CD4-positive, alpha-beta T cell (primary cell): ENCODE measurements at regions of chr5 and their contacts with region 1.

Region 1: DNA sequence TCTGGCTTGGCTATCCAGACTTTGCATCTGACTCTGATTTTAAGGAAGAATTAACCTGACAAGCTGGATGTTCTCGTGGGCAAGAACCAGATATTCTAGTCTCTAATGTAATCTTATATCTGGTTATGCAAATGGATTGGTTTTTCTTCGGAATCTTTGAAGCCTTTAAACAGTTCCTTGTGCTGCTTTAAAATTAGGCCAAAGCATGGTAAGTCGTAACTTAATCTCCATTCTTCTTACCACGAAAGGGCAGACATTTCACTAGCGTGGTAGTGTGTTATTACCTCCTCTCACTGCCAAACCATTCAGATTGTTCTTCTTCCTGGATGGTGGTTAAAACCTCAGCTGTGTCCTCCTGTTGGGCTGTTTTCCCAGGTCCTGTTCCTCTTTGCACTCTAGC is 34.1 kb upstream of the TTC23L start:
- DNase-seq: no peak
- ATAC-seq: no peak
- H3K4me3 ChIP-seq: no peak overlapping the region
- H3K4me3 Mint-ChIP-seq: no peak overlapping the region
- H3K27ac ChIP-seq: no peak overlapping the region
- H3K27ac Mint-ChIP-seq: no peak overlapping the region
- H3K4me1 ChIP-seq: no peaks in the 10 kb centered on the region
- H3K4me1 Mint-ChIP-seq: no peaks in the 10 kb centered on the region
- H3K27me3 ChIP-seq: no peaks in the 10 kb centered on the region
- H3K27me3 Mint-ChIP-seq: no peaks in the 10 kb centered on the region
- CTCF ChIP-seq: no peak

Region 2: GRCh38 chr5:34743878-34744277 is 61.0 kb before region 1 on chr5:
- CTCF ChIA-PET with region 1: no interaction called
- POLR2A ChIA-PET with region 1: no interaction called
- intact Hi-C with region 1: no loop called
- DNase-seq: no peak
- ATAC-seq: no peak
- H3K4me3 ChIP-seq: no peak overlapping the region
- H3K4me3 Mint-ChIP-seq: no peak overlapping the region
- H3K27ac ChIP-seq: no peak overlapping the region
- H3K27ac Mint-ChIP-seq: no peak overlapping the region
- H3K4me1 ChIP-seq: peaks cover 4% of the 10 kb centered on the region
- H3K4me1 Mint-ChIP-seq: no peaks in the 10 kb centered on the region
- H3K27me3 ChIP-seq: no peaks in the 10 kb centered on the region
- H3K27me3 Mint-ChIP-seq: no peaks in the 10 kb centered on the region
- CTCF ChIP-seq: no peak

Region 3: DNA sequence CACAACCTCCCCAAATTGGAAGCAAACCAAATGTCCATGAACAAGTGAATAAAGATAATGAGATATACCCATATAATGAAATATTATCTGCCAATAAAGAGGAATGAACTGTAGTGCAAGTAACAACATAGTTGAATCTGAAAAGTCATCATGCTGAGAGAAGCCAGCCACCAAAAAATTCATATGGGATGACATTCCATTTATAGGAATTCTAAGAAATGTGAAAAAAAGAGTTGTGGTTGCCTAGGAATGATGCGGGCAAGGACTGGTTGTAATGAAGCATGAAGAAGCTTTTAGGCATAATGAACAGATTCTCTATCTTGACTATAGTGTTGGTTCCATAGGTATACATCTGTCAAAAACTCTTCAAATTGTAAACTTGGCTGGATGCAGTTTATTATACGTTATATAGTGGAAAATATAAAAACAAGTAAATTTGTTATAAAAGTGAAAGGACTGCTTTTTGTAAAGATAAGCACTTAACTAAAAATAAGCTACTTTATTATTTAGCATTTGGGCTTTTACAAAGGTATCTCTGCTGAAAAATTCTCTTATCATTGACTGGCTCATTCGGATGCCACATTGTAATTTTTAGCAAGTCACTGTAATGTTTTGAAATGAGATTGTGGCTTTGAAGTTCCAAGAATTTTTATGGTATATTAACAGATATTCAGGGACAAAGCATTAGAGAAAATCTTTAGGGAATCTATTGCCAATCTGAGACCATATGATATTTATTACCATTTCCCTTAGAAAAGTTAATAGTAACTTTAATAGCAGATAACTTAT is 12.8 kb after region 1 on chr5:
- CTCF ChIA-PET with region 1: no interaction called
- POLR2A ChIA-PET with region 1: no interaction called
- intact Hi-C with region 1: no loop called
- DNase-seq: no peak
- ATAC-seq: no peak
- H3K4me3 ChIP-seq: no peak overlapping the region
- H3K4me3 Mint-ChIP-seq: no peak overlapping the region
- H3K27ac ChIP-seq: no peak overlapping the region
- H3K27ac Mint-ChIP-seq: no peak overlapping the region
- H3K4me1 ChIP-seq: no peaks in the 10 kb centered on the region
- H3K4me1 Mint-ChIP-seq: no peaks in the 10 kb centered on the region
- H3K27me3 ChIP-seq: no peaks in the 10 kb centered on the region
- H3K27me3 Mint-ChIP-seq: no peaks in the 10 kb centered on the region
- CTCF ChIP-seq: no peak

Region 4: GRCh38 chr5:34833976-34834793 is 29.3 kb after region 1 on chr5:
- CTCF ChIA-PET with region 1: no interaction called
- POLR2A ChIA-PET with region 1: no interaction called
- intact Hi-C with region 1: no loop called
- DNase-seq: no peak
- ATAC-seq: no peak
- H3K4me3 ChIP-seq: no peak overlapping the region
- H3K4me3 Mint-ChIP-seq: no peak overlapping the region
- H3K27ac ChIP-seq: no peak overlapping the region
- H3K27ac Mint-ChIP-seq: no peak overlapping the region
- H3K4me1 ChIP-seq: peaks cover 9% of the 10 kb centered on the region
- H3K4me1 Mint-ChIP-seq: peaks cover 11% of the 10 kb centered on the region
- H3K27me3 ChIP-seq: no peaks in the 10 kb centered on the region
- H3K27me3 Mint-ChIP-seq: no peaks in the 10 kb centered on the region
- CTCF ChIP-seq: no peak

Region 5: DNA sequence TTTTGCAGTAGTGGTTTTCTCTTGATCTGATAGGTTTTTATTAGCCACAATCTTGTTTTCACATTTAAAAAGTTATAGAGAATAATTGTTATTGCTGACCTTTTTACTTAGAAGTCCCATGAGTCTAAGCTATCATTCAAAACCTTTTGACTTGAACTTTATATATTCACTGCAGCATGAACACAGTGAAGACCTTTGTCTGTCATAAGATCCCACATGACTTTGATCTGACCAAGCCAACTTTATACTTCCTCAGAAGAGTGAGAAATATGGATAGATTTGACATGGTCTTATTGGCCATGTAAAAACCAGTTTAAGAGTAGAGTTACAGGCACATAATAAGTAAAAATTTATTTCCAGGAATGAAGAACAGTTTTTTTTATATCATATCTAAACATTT is 76.3 kb after region 1 on chr5:
- CTCF ChIA-PET with region 1: no interaction called
- POLR2A ChIA-PET with region 1: no interaction called
- intact Hi-C with region 1: loop called in 1 of 2 experiments (anchors 5 kb)
- DNase-seq: no peak
- ATAC-seq: no peak
- H3K4me3 ChIP-seq: no peak overlapping the region
- H3K4me3 Mint-ChIP-seq: no peak overlapping the region
- H3K27ac ChIP-seq: no peak overlapping the region
- H3K27ac Mint-ChIP-seq: no peak overlapping the region
- H3K4me1 ChIP-seq: no peaks in the 10 kb centered on the region
- H3K4me1 Mint-ChIP-seq: no peaks in the 10 kb centered on the region
- H3K27me3 ChIP-seq: no peaks in the 10 kb centered on the region
- H3K27me3 Mint-ChIP-seq: peaks cover 14% of the 10 kb centered on the region
- CTCF ChIP-seq: no peak

Region 6: GRCh38 chr5:34923694-34924461 is 119.0 kb after region 1 on chr5:
- CTCF ChIA-PET with region 1: no interaction called
- POLR2A ChIA-PET with region 1: no interaction called
- intact Hi-C with region 1: no loop called
- DNase-seq: peak in 3 of 14 experiments; percentile 29 to 43 (median 35)
- ATAC-seq: peak; percentile 59
- H3K4me3 ChIP-seq: no peak overlapping the region
- H3K4me3 Mint-ChIP-seq: no peak overlapping the region
- H3K27ac ChIP-seq: no peak overlapping the region
- H3K27ac Mint-ChIP-seq: no peak overlapping the region
- H3K4me1 ChIP-seq: peaks cover 2% of the 10 kb centered on the region
- H3K4me1 Mint-ChIP-seq: peaks cover under 1% of the 10 kb centered on the region
- H3K27me3 ChIP-seq: no peaks in the 10 kb centered on the region
- H3K27me3 Mint-ChIP-seq: no peaks in the 10 kb centered on the region
- CTCF ChIP-seq: no peak